ENCODE measurements at regions of chr6 and their contacts with region 1.

Region 1: GRCh38 chr6:113858480-113859348 is 1.6 kb downstream of the MARCKS start:
- DNase-seq: peak; percentile 82
- ATAC-seq: peak; percentile 95
- H3K4me3 Mint-ChIP-seq: peak overlapping the region; percentile 30
- H3K27ac Mint-ChIP-seq: no peak overlapping the region
- H3K4me1 Mint-ChIP-seq: peaks cover 18% of the 10 kb centered on the region
- H3K27me3 Mint-ChIP-seq: peaks cover 34% of the 10 kb centered on the region

Region 2: DNA sequence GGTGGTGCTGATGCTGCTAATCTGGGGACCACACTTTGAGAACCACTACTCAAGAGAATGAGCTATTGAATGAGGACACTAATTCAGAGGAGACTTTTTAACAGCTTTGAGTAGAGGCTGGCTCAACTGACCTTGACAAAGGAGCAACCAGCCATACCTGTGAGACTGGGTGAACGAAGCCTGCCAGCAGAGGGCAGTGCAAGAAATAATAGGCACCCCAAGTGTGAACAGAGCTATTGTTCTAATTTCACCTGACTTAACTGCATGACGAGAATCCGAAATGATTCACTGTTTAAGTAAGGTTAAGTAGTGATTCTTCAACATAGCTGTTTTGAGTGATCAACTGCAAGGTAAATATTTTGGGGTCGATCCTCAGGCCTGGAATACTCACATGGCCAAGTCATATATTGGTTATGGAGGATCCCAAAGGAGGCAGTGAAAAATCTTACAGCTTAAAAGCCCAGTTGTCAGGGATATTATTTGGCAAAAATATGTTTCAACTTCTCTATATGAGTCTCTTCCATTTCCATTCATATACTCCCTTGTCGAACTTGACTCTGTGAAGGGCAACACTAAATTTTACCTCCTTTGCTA is 552.1 kb before region 1 on chr6:
- CTCF ChIA-PET with region 1: interaction called, 20 read pairs
- DNase-seq: peak; percentile 60
- ATAC-seq: peak; percentile 67
- H3K4me3 Mint-ChIP-seq: no peak overlapping the region
- H3K27ac Mint-ChIP-seq: no peak overlapping the region
- H3K4me1 Mint-ChIP-seq: no peaks in the 10 kb centered on the region
- H3K27me3 Mint-ChIP-seq: no peaks in the 10 kb centered on the region

Region 3: DNA sequence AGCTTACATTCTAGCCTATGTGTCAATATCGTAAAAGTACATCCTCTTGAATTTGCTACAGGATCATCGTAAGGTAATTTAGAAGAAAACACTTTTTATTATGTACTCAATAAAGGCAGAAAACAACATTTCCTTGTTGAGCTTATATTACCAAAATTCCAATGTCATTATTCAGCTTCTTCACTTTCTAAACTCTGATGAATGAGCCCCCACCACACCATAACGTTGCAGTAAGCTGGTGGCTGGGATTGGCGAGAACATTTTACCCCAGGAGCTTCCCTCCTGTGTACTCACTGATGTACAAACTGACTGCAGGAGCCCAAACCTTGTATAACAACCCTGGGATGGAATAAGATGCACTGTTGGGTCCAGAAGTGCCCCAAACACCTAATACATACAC is 239.6 kb before region 1 on chr6:
- CTCF ChIA-PET with region 1: no interaction called
- DNase-seq: no peak
- ATAC-seq: no peak
- H3K4me3 Mint-ChIP-seq: no peak overlapping the region
- H3K27ac Mint-ChIP-seq: no peak overlapping the region
- H3K4me1 Mint-ChIP-seq: no peaks in the 10 kb centered on the region
- H3K27me3 Mint-ChIP-seq: peaks cover 16% of the 10 kb centered on the region

Region 4: GRCh38 chr6:113894712-113895674 is 36.3 kb after region 1 on chr6:
- CTCF ChIA-PET with region 1: no interaction called
- DNase-seq: no peak
- ATAC-seq: no peak
- H3K4me3 Mint-ChIP-seq: no peak overlapping the region
- H3K27ac Mint-ChIP-seq: no peak overlapping the region
- H3K4me1 Mint-ChIP-seq: no peaks in the 10 kb centered on the region
- H3K27me3 Mint-ChIP-seq: peaks cover 24% of the 10 kb centered on the region

Region 5: GRCh38 chr6:114064862-114065261 is 206.1 kb after region 1 on chr6:
- CTCF ChIA-PET with region 1: no interaction called
- DNase-seq: no peak
- ATAC-seq: no peak
- H3K4me3 Mint-ChIP-seq: no peak overlapping the region
- H3K27ac Mint-ChIP-seq: no peak overlapping the region
- H3K4me1 Mint-ChIP-seq: no peaks in the 10 kb centered on the region
- H3K27me3 Mint-ChIP-seq: no peaks in the 10 kb centered on the region